ENCODE measurements at regions of chr15 and their contacts with region 1.

Region 1: GRCh38 chr15:51917493-51917892 is 54.1 kb downstream of the LEO1 start:
- DNase-seq: no peak
- ATAC-seq: no peak
- H3K4me3 ChIP-seq: no peak overlapping the region
- H3K4me3 Mint-ChIP-seq: no peak overlapping the region
- H3K27ac ChIP-seq: no peak overlapping the region
- H3K27ac Mint-ChIP-seq: no peak overlapping the region
- H3K4me1 ChIP-seq: no peaks in the 10 kb centered on the region
- H3K4me1 Mint-ChIP-seq: no peaks in the 10 kb centered on the region
- H3K27me3 ChIP-seq: no peaks in the 10 kb centered on the region
- H3K27me3 Mint-ChIP-seq: no peaks in the 10 kb centered on the region
- CTCF ChIP-seq: no peak

Region 2: DNA sequence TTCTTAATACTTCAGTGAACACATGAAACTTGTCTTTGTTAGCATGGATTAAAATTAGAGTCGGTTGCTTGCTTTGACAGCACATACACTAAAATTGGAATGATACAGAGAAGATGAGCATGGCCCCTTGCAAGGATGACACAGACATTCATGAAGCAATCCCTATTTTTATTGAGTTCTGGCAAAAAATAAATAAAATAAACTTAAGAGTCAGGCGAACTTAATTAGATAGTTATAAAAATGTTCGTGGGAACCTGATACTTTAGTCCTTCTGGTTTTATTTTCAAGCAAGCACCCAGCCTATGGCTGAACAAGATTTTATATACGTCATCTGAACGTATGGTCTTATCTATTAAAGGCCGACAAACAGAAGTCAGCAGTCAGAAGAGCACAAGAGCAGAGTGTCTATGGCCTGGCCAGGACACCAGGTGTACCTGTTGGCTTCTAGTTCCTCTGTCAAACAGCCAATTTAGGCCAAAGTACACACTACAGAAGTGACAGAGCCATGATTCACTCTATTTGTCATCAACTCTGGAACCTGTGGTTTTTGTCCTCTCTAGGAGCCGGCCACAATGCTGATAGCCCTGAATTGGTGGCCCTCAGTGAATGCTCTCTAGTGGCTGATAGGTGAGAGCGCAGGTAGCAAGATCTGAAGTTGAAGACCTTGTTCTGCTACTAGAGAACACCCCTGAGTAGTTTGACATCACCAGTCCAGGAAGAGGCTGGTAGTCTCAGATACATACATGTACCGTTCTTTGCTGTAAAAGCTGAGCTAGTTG is 10.2 kb before region 1 on chr15:
- CTCF ChIA-PET with region 1: interaction called, 11 read pairs
- POLR2A ChIA-PET with region 1: no interaction called
- intact Hi-C with region 1: no loop called
- DNase-seq: no peak
- ATAC-seq: no peak
- H3K4me3 ChIP-seq: no peak overlapping the region
- H3K4me3 Mint-ChIP-seq: no peak overlapping the region
- H3K27ac ChIP-seq: no peak overlapping the region
- H3K27ac Mint-ChIP-seq: no peak overlapping the region
- H3K4me1 ChIP-seq: no peaks in the 10 kb centered on the region
- H3K4me1 Mint-ChIP-seq: no peaks in the 10 kb centered on the region
- H3K27me3 ChIP-seq: no peaks in the 10 kb centered on the region
- H3K27me3 Mint-ChIP-seq: no peaks in the 10 kb centered on the region
- CTCF ChIP-seq: no peak